GM12878 (cell line): ENCODE measurements at regions of chr11 and their contacts with region 1.

Region 1: GRCh38 chr11:74449369-74449931 is 17.9 kb downstream of the KCNE3 start:
- DNase-seq: peak; percentile 28
- ATAC-seq: peak; percentile 96
- H3K4me3 ChIP-seq: no peak overlapping the region
- H3K27ac ChIP-seq: no peak overlapping the region
- H3K4me1 ChIP-seq: peaks cover 3% of the 10 kb centered on the region
- H3K27me3 ChIP-seq: no peaks in the 10 kb centered on the region
- CTCF ChIP-seq: peak; percentile 67 to 83 (median 69)
- EP300 ChIP-seq: no peak
- POLR2A ChIP-seq: no peak
- RAD21 ChIP-seq: peak; percentile 89

Region 2: DNA sequence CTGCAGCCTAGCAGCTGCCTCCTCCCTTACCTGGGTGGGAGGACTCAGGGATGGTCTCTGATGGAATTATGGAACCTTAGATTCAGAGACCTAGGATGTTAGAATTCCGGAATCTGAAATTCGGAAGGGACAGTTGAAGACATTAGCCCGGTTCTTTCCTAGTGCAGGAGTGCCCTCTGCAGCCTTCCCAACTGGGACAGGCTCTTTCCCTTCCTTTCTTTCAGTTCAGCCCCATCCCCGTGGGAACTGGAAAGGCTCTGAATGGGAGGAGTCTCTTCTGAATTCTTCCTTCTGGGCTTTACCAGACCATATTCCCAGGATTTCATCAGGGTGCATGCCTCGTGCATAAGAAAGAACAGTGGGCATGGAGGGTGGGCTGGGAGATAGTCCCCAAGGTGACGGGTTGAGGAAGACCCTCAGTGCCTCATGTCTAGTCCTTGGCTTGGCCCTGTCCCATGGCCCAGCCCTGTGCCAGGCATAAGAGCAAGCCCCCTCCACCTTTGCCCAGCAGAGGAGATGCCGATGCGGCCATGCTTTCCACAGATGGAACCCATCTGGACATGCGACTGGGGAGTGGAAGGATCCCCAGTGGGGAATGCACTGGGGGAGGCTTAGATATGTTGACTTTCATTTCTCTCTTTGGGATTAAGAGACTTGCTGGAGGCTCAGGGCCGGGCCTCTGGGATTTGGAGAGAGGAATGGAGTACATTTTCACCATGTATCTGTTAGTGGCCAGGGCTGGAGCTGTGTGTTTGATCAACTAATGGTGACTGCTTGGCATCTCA is 484.2 kb before region 1 on chr11:
- CTCF ChIA-PET with region 1: interaction called, 7 read pairs
- POLR2A ChIA-PET with region 1: no interaction called
- RAD21 ChIA-PET with region 1: interaction called, 4 read pairs
- SMC1A ChIA-PET with region 1: interaction called, 4 read pairs
- in situ Hi-C with region 1: no loop called
- intact Hi-C with region 1: loop called (anchors 5 kb)
- DNase-seq: no peak
- ATAC-seq: no peak
- H3K4me3 ChIP-seq: no peak overlapping the region
- H3K27ac ChIP-seq: no peak overlapping the region
- H3K4me1 ChIP-seq: no peaks in the 10 kb centered on the region
- H3K27me3 ChIP-seq: no peaks in the 10 kb centered on the region
- CTCF ChIP-seq: no peak
- EP300 ChIP-seq: no peak
- POLR2A ChIP-seq: no peak
- RAD21 ChIP-seq: no peak

Region 3: GRCh38 chr11:74380746-74381430 is 68.6 kb before region 1 on chr11:
- CTCF ChIA-PET with region 1: interaction called, 39 read pairs
- POLR2A ChIA-PET with region 1: no interaction called
- RAD21 ChIA-PET with region 1: interaction called, 8 read pairs
- SMC1A ChIA-PET with region 1: interaction called, 13 read pairs
- in situ Hi-C with region 1: no loop called
- intact Hi-C with region 1: no loop called
- DNase-seq: no peak
- ATAC-seq: no peak
- H3K4me3 ChIP-seq: no peak overlapping the region
- H3K27ac ChIP-seq: no peak overlapping the region
- H3K4me1 ChIP-seq: no peaks in the 10 kb centered on the region
- H3K27me3 ChIP-seq: no peaks in the 10 kb centered on the region
- CTCF ChIP-seq: no peak
- EP300 ChIP-seq: no peak
- POLR2A ChIP-seq: no peak
- RAD21 ChIP-seq: no peak

Region 4: DNA sequence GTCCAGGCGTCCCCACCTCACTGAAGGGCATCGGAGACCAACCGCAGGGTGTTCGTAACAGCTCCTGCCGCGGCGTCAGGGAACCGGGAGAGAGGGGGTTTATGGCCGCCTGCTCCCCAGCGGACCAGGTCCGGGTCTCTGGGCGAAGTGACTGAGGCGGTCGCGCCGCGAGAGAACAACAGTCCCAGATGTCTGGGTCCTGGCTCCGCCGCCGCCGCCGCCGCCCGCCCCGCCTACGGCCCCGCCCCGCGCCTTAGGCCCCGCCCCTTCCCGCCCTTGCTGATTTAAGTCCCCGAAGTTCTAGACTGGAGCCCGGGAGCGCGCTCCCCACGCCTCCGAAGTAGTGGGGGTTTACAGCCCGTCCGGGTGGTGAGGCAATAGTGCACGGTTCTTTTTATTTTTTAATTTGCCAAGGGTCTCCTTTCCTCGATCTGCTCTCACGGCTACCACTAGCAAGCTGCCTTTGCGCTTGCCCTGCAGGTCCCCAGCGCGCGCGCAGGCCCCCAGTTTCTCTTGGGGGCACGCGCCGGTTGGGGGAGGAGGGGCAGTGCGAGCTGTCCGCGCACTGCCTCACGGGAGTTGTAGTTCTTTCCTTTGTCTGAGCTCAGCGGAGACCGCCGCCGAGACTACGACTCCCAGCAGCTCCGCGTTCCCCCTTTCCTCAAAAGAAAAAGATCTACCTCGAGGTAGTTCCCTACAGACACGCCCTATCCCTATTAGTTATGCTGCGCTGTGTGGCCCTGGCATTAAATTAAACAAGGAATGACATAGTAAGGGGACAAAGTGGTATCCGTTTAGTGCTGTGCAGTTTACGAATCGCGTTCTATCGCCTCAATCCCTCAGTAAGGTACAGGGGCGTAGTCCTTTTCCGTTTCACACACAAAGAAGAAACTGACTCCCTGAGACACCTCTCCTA is 50.9 kb before region 1 on chr11 and contains the start of gene PGM2L1:
- CTCF ChIA-PET with region 1: interaction called, 262 read pairs
- POLR2A ChIA-PET with region 1: no interaction called
- RAD21 ChIA-PET with region 1: interaction called, 77 read pairs
- SMC1A ChIA-PET with region 1: interaction called, 6 read pairs
- in situ Hi-C with region 1: loop called (anchors 5 kb)
- intact Hi-C with region 1: no loop called
- DNase-seq: peak; percentile 84
- ATAC-seq: peak; percentile 96
- H3K4me3 ChIP-seq: peak within 1 kb of the TSS; percentile 80
- H3K27ac ChIP-seq: 0 out of 2 replicates have a peak within 1 kb of the TSS, but pooled peaks have one; percentile 27
- H3K4me1 ChIP-seq: no peaks in the 10 kb centered on the region
- H3K27me3 ChIP-seq: no peaks in the 10 kb centered on the region
- CTCF ChIP-seq: no peak
- EP300 ChIP-seq: no peak
- POLR2A ChIP-seq: peak; percentile 56; the same call in 1 of the 2 replicates
- RAD21 ChIP-seq: no peak
- polyA plus RNA-seq, gene PGM2L1: 0.04 TPM in 1 of 2 experiments, not detected in the other

Region 5: GRCh38 chr11:74434528-74434927 is 14.9 kb before region 1 on chr11:
- CTCF ChIA-PET with region 1: interaction called, 17 read pairs
- POLR2A ChIA-PET with region 1: no interaction called
- RAD21 ChIA-PET with region 1: interaction called, 9 read pairs
- SMC1A ChIA-PET with region 1: interaction called, 15 read pairs
- in situ Hi-C with region 1: no loop called
- intact Hi-C with region 1: no loop called
- DNase-seq: no peak
- ATAC-seq: no peak
- H3K4me3 ChIP-seq: no peak overlapping the region
- H3K27ac ChIP-seq: no peak overlapping the region
- H3K4me1 ChIP-seq: no peaks in the 10 kb centered on the region
- H3K27me3 ChIP-seq: no peaks in the 10 kb centered on the region
- CTCF ChIP-seq: no peak
- EP300 ChIP-seq: no peak
- POLR2A ChIP-seq: no peak
- RAD21 ChIP-seq: no peak

Region 6: DNA sequence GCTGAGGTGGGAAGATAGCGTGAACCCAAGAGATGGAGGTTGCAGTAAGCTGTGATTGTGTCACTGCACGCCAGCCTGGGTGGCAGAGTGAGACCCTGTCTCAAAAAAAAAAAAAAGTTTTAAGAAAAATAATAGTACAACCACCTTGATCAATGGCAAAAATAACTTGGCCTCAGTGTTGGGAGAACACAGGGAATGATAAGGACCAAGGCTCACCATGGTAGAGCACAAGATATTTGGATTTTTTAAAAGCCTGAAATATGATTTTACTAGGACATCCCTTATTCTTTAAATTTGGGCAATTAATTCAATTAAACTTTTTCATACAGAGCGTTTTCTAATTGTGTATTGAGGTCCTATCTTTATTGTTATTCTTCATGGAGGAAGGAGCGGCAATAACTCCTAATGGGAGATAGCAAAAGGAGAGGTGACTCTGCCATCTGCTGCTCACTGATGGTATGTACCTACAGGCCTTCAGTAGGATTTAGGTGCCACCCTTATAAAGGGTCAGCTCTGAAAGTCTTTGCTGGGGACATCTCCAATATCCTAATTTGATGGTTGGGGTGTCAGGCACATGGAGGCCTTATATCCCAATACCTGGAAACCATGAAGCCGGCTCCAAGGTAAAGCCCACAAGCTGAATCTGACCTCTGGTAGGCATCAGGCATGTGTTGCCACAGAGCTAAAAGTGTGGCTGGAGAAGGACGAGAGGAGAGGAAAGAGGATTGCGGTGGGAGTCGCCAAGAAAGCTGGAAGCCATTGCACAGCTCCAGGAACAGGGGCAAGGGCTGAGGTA is 121.0 kb after region 1 on chr11:
- CTCF ChIA-PET with region 1: interaction called, 122 read pairs
- POLR2A ChIA-PET with region 1: no interaction called
- RAD21 ChIA-PET with region 1: interaction called, 35 read pairs
- SMC1A ChIA-PET with region 1: interaction called, 66 read pairs
- in situ Hi-C with region 1: no loop called
- intact Hi-C with region 1: loop called (anchors 1 kb)
- DNase-seq: no peak
- ATAC-seq: peak; percentile 88
- H3K4me3 ChIP-seq: no peak overlapping the region
- H3K27ac ChIP-seq: no peak overlapping the region
- H3K4me1 ChIP-seq: no peaks in the 10 kb centered on the region
- H3K27me3 ChIP-seq: no peaks in the 10 kb centered on the region
- CTCF ChIP-seq: peak; percentile 52 to 76 (median 62); a peak in 5 of 6 replicates
- EP300 ChIP-seq: no peak
- POLR2A ChIP-seq: no peak
- RAD21 ChIP-seq: peak; percentile 74